ENCODE measurements at regions of chr5 and their contacts with region 1.

Region 1: GRCh38 chr5:112146323-112147226 is 272.5 kb downstream of the EPB41L4A start:
- DNase-seq: peak; percentile 44
- CTCF ChIP-seq: peak; percentile 55

Region 2: GRCh38 chr5:111158105-111158744 is 988.4 kb before region 1 on chr5:
- in situ Hi-C with region 1: loop called (anchors 25 kb)
- DNase-seq: peak; percentile 55
- CTCF ChIP-seq: peak; percentile 95

Region 3: DNA sequence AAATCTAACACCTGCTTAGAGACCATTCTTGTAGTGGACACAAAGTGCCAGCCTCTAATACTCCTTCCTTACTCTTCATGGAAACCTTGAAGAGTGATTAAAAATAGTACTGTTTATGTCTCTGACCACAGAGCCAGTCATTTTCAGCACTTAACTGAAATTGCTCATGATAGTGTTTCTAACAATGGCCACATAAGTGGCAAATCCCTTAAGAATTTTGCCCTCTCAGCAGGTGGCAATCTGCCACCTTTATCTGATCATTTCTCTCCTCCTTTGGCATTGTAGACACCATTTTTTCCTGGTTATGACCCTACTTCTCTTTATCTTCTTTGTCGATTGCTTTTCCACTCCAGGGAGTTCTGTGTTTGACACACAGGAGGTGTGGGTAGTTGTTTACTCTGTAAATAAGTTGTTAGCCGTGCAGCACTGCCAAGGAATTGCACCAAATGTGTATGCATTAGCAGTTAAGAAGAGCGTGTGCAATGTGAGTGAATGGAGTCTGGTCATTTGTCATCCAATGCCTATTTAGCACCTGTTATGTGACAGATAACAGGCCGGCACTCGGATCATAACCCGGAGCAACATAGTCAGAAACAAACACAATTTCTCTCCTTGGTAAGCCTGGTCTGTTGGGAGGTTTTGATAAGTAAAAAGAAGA is 597.5 kb before region 1 on chr5:
- in situ Hi-C with region 1: loop called (anchors 5 kb)
- DNase-seq: no peak
- CTCF ChIP-seq: no peak

Region 4: GRCh38 chr5:111762895-111763294 is 383.7 kb before region 1 on chr5:
- in situ Hi-C with region 1: loop called (anchors 10 kb)
- DNase-seq: no peak
- CTCF ChIP-seq: no peak

Region 5: GRCh38 chr5:112049738-112050137 is 96.8 kb before region 1 on chr5:
- in situ Hi-C with region 1: no loop called
- DNase-seq: no peak
- CTCF ChIP-seq: no peak